Left ventricle myocardium inferior (tissue), 1 donor: ENCODE measurements at regions of chr1 and their contacts with region 1.

Region 1: DNA sequence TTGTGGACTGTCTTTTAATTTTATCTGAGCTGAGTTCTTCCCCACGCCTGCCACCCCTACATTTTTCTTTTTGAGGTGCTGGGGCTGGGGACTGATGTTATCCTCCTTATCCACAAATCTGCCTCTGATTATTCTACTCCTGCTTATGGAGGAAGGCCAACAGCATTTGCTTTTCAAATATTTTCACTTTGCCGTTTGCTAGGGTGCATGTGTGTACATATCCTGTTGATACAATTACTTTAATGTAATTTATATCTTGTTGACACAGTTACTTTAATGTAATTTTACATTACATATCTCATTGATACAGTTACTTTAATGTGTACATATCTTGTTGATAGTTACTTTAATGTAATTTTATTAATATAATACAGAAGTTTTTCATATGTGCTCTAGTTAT is 36.2 kb downstream of the PRRC2C start:
- DNase-seq: no peak
- H3K4me3 ChIP-seq: no peak overlapping the region
- H3K27ac ChIP-seq: no peak overlapping the region
- H3K4me1 ChIP-seq: peaks cover 8% of the 10 kb centered on the region
- H3K27me3 ChIP-seq: no peaks in the 10 kb centered on the region
- CTCF ChIP-seq: no peak

Region 2: DNA sequence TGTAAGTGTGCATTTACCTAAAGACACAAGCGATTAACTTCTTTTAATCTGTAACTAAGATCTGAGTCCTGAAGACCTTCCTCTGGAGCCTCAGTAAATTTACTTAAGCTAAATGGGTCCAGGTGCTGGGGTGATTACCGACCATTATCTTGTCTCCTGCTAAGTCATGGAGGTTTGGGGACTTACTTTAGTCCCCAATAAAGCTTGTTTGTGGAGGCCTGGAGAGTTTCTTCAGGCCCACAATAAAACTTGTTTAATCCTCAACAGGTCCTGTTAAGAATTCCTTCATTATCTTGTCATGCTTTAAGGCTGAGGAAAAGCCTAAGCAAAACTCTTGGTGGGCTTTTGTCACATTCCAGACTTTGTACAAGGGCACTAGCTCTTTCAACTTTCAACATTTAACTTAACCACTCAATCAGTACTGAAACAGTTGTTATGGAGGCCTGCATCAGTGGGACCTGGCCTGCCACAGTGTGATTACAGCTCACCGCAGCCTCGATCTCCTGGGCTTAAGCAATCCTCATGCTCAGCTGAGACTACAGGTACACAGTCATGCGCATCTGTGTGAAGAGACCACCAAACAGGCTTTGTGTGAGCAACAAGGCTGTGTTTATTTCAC is 123.6 kb before region 1 on chr1:
- intact Hi-C with region 1: no loop called
- DNase-seq: no peak
- H3K4me3 ChIP-seq: no peak overlapping the region
- H3K27ac ChIP-seq: no peak overlapping the region
- H3K4me1 ChIP-seq: peaks cover 4% of the 10 kb centered on the region
- H3K27me3 ChIP-seq: no peaks in the 10 kb centered on the region
- CTCF ChIP-seq: no peak

Region 3: DNA sequence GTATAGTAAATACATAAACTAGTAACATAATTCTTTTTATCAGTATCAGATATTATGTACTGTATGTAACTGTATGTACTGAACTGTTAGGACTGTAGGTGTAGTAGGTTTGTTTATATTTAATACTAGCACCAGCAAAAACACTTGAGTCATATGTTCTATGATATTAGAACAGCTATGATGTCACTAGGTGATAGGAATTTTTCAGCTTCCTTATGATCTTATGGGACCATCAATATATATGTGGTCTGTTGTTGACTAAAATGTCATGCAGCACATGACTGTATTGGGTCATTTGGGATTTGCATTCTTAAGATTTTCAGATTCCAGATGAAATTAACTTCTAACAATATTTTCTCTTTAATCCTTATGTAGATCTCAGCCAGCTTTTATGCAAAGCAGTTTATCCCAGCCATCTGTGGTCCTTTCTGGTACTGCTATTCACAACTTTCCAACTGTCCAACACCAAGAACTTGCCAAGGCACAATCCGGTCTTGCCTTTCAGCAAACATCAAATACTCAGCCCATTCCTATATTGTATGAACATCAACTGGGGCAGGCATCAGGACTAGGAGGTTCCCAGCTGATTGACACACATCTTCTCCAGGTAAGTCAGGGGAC is 62.1 kb after region 1 on chr1:
- intact Hi-C with region 1: loop called (anchors 10 kb)
- DNase-seq: no peak
- H3K4me3 ChIP-seq: no peak overlapping the region
- H3K27ac ChIP-seq: no peak overlapping the region
- H3K4me1 ChIP-seq: no peaks in the 10 kb centered on the region
- H3K27me3 ChIP-seq: no peaks in the 10 kb centered on the region
- CTCF ChIP-seq: no peak